Left ventricle myocardium inferior (tissue), 1 donor: ENCODE measurements at regions of chr10 and their contacts with region 1.

Region 1: GRCh38 chr10:125048101-125048864 is 106.4 kb downstream of the ZRANB1 start:
- DNase-seq: peak; percentile 87
- H3K4me3 ChIP-seq: peak overlapping the region; percentile 7
- H3K27ac ChIP-seq: peak overlapping the region; percentile 51
- H3K4me1 ChIP-seq: peaks cover 90% of the 10 kb centered on the region
- H3K27me3 ChIP-seq: no peaks in the 10 kb centered on the region
- CTCF ChIP-seq: peak; percentile 99

Region 2: GRCh38 chr10:124648738-124649137 is 399.5 kb before region 1 on chr10:
- intact Hi-C with region 1: no loop called
- DNase-seq: peak; percentile 74
- H3K4me3 ChIP-seq: no peak overlapping the region
- H3K27ac ChIP-seq: peak overlapping the region; percentile 86
- H3K4me1 ChIP-seq: peaks cover 100% of the 10 kb centered on the region
- H3K27me3 ChIP-seq: no peaks in the 10 kb centered on the region
- CTCF ChIP-seq: no peak

Region 3: DNA sequence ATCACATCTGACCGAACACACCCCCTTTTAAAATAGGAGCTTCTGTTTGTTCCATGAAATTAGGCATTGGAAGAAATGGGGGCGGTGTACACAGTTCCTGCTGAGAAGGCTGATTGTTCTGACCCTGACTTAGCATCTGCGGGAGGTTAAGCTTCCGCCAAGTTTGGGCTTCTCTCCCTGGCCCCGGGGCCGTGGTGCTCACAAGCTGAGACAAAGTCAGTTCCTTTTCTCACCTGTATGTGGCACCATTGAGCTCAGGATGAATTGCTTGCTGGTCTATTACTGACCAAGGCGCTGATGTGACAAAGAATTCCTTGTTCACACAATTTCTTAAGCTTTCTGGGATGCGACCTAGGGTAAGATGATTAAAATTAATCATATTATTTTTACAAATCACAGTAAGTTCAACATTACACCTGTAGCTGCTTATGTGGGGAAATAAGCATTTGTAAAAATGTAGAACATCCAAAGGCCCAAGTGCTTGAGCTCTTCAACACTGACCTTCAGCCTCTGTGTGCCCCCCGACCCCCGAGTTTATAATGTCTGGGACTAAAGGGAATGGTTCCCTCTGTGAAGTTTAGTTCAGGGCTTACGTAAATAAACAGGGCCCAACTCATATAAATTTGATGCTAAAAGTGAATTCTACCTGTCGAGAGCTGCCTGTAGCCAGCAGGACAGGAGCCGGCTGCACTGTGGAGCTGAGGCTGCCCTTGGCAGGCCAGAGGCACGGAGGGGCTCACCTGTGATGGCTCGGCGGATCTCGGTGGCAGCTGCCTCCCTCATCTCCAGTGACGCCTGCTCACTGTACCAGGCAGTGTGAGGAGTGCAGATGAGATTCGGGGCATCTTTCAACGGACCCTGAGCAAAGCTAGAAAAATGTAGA is 55.6 kb before region 1 on chr10:
- intact Hi-C with region 1: loop called (anchors 10 kb)
- DNase-seq: peak; percentile 45
- H3K4me3 ChIP-seq: no peak overlapping the region
- H3K27ac ChIP-seq: peak overlapping the region; percentile 9
- H3K4me1 ChIP-seq: peaks cover 32% of the 10 kb centered on the region
- H3K27me3 ChIP-seq: no peaks in the 10 kb centered on the region
- CTCF ChIP-seq: peak; percentile 87

Region 4: DNA sequence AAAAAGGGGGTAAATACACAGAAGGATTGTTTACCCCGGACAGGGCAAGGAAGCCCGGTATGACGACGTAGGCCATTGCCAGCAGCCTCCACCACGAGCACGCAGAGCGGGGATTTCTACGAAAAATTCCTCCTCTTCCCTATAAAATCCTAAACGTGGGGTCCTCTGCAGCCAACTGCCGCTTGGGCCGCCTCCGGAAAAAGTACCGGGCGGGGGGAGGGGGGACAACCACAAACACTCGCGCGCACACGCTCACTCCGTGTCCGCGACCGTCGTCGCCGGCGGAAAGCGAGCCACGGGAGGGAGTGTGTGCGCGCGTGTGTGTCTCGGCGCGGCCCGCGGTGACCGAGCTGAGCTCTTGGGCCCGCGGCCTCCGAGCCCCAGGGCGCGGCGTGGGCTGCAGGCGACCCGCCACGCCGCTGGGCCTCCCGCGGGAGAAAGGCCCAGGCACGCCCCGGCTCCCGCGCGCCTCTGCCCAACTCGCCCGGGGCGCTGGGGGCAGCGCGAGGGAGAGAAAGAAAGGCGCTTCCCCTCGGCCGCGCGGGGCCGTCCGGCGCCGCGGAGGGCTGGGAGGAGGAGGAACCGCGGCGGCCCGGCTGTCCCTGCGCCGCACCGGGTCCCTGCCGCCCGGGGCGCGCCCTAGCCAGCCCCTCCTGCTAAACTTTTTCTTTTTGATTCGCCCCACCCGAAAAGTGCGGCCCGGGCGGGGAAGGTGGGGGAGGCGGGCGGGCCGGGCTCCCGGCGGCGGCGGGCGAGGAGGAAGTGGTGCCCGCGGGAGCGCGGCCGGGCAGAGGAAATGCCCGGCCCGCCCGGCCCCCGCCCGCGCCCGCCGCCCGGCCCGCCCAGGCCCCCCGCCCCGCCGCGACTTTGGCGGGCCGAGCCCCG is 110.6 kb after region 1 on chr10:
- intact Hi-C with region 1: loop called (anchors 10 kb)
- DNase-seq: peak; percentile 71
- H3K4me3 ChIP-seq: peak overlapping the region; percentile 93
- H3K27ac ChIP-seq: peak overlapping the region; percentile 98
- H3K4me1 ChIP-seq: peaks cover 67% of the 10 kb centered on the region
- H3K27me3 ChIP-seq: no peaks in the 10 kb centered on the region
- CTCF ChIP-seq: no peak